ENCODE measurements at regions of chr16 and their contacts with region 1.

Region 1: DNA sequence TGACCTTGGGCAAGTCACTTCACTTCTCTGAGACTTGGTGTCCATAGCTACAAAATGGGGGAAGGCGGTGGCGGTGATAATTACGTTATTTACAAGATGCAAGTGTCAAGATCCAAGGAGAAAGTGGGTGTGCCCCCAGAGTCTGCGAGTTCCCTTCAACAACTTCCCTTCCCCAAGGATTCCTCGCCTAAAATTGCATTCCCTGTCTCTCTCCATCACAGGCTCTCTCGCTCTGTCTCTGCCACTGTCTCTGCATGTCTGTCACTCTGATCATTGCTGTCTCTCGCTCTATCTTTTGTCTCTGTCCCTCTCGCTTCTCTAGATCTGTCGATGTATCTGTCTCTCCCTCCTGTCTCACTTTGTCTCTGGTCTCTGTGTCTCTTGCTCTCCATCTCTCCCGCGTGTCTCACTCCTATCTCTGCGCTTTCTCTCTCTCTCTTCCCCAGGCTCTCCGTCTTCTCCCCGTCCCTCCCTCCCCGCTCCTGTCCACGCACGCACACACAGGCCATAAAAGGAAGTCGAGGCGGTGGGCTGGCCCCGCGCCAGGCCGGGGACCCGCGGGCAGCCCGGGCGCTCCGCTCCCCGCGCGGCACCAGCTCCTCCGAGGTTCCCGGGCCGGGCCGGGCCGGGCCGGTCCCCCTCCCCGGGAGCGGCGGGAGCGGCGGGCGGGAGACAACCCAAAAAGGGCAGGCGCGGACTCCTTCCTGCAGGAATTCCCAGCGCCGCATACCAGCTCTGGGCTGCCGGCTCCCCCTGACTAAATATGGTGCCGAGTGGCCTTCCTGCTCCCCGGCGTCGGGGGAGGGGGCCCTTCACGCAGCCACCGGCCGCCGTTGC is 1.1 kb upstream of the MYH11 start:
- DNase-seq: peak; percentile 85 to 91
- ATAC-seq: peak; percentile 84
- H3K4me3 ChIP-seq: peak overlapping the region; percentile 83 to 99
- H3K27ac ChIP-seq: peak overlapping the region; percentile 96 to 97
- H3K4me1 ChIP-seq: no peaks in the 10 kb centered on the region
- H3K27me3 ChIP-seq: no peaks in the 10 kb centered on the region

Region 2: GRCh38 chr16:15765880-15766279 is 92.1 kb before region 1 on chr16:
- intact Hi-C with region 1: loop called in 1 of 2 experiments (anchors 5 kb)
- DNase-seq: peak in 1 of 2 donors; percentile 28
- ATAC-seq: peak; percentile 56
- H3K4me3 ChIP-seq: no peak overlapping the region
- H3K27ac ChIP-seq: peak overlapping the region in 1 of 2 donors; percentile 5
- H3K4me1 ChIP-seq: peaks cover 0 to 4% of the 10 kb centered on the region in 2 donors
- H3K27me3 ChIP-seq: no peaks in the 10 kb centered on the region

Region 3: GRCh38 chr16:15790458-15790857 is 67.5 kb before region 1 on chr16:
- intact Hi-C with region 1: loop called in 1 of 2 experiments (anchors 5 kb)
- DNase-seq: peak in 1 of 2 donors; percentile 57
- ATAC-seq: peak; percentile 30
- H3K4me3 ChIP-seq: no peak overlapping the region
- H3K27ac ChIP-seq: peak overlapping the region; percentile 33 to 50
- H3K4me1 ChIP-seq: peaks cover 0 to 3% of the 10 kb centered on the region in 2 donors
- H3K27me3 ChIP-seq: no peaks in the 10 kb centered on the region

Region 4: GRCh38 chr16:16083421-16084156 is 225.6 kb after region 1 on chr16:
- intact Hi-C with region 1: loop called in 1 of 2 experiments (anchors 10 kb)
- DNase-seq: no peak
- ATAC-seq: no peak
- H3K4me3 ChIP-seq: no peak overlapping the region
- H3K27ac ChIP-seq: no peak overlapping the region
- H3K4me1 ChIP-seq: no peaks in the 10 kb centered on the region
- H3K27me3 ChIP-seq: no peaks in the 10 kb centered on the region